Endothelial cell of umbilical vein (primary cell): ENCODE measurements at regions of chr19 and their contacts with region 1.

Region 1: DNA sequence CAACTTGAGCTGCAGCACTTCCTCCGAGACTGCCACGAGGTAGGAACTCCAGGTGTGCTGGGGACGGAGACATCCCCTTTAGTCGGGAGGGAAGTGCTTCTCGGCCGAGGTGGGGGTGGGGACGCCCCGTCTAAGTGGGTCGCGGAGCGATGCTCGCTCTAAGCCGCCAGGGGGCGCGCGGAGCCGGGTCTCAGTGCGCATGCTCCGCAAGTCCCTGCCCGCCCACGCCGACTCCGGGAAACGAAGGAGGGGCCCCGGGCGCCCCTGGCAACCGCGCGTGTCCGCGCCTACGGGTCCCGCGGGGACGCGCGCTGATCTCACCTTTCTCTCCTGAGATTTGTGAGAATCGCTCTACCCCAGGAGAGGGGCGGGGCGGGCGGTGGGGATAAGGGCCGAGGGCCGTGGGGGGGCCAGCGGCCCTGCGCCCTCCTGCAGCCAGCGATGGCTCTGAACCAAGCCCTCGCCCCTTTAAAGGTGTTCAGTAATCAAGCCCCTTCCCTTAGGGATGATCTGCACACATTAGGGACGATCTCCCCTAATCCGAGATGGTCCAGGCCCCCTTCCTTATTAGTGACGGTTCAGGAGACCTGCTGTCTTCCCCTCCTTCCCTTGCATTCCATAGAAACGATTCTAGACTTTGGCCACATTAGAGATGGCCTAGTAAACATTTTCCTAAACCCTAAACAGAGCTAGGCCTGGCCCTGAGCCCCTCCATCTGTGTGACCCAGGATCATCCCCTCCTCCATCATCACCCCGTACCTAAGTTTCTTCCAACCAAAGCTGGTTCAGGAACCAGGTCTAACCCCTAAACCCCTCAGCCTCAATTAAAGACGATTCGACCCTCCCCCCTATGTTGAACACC is 47.3 kb upstream of the SHKBP1 start:
- DNase-seq: peak; percentile 87
- H3K4me3 ChIP-seq: peak overlapping the region in 1 of 3 experiments; percentile 27
- H3K27ac ChIP-seq: no peak overlapping the region
- H3K4me1 ChIP-seq: no peaks in the 10 kb centered on the region
- H3K27me3 ChIP-seq: peaks cover 2 to 6% of the 10 kb centered on the region in 2 experiments
- CTCF ChIP-seq: peak; percentile 93 to 98
- POLR2A ChIP-seq: no peak

Region 2: GRCh38 chr19:40542202-40542859 is 13.0 kb after region 1 on chr19:
- CTCF ChIA-PET with region 1: interaction called, 14 read pairs
- POLR2A ChIA-PET with region 1: no interaction called
- dilution Hi-C with region 1: no loop called
- intact Hi-C with region 1: no loop called
- DNase-seq: no peak
- H3K4me3 ChIP-seq: no peak overlapping the region
- H3K27ac ChIP-seq: no peak overlapping the region
- H3K4me1 ChIP-seq: no peaks in the 10 kb centered on the region
- H3K27me3 ChIP-seq: no peaks in the 10 kb centered on the region
- CTCF ChIP-seq: no peak
- POLR2A ChIP-seq: no peak

Region 3: DNA sequence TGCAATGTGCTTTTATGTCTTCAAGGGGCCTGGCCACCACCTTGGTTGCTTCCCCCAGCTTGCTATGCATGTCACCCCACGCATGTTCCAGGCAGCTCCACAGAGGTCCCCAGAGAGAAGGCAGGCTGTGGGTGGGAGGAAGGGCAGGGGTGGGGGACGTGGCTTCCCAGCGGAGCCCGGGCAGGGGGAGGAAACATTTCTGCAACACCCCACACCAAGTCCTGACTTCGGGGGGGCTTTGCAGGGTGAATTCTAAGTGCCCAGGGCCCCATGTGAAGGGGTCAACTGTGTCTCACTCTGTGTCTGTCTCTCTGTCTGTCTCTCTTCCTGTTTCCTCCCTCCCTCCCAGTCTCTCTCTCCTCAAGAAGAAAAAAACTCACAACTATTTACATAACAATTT is 111.4 kb after region 1 on chr19:
- CTCF ChIA-PET with region 1: interaction called, 10 read pairs
- POLR2A ChIA-PET with region 1: no interaction called
- dilution Hi-C with region 1: no loop called
- intact Hi-C with region 1: no loop called
- DNase-seq: peak; percentile 19
- H3K4me3 ChIP-seq: no peak overlapping the region
- H3K27ac ChIP-seq: peak overlapping the region; percentile 10
- H3K4me1 ChIP-seq: peaks cover 14% of the 10 kb centered on the region
- H3K27me3 ChIP-seq: no peaks in the 10 kb centered on the region
- CTCF ChIP-seq: no peak
- POLR2A ChIP-seq: no peak

Region 4: DNA sequence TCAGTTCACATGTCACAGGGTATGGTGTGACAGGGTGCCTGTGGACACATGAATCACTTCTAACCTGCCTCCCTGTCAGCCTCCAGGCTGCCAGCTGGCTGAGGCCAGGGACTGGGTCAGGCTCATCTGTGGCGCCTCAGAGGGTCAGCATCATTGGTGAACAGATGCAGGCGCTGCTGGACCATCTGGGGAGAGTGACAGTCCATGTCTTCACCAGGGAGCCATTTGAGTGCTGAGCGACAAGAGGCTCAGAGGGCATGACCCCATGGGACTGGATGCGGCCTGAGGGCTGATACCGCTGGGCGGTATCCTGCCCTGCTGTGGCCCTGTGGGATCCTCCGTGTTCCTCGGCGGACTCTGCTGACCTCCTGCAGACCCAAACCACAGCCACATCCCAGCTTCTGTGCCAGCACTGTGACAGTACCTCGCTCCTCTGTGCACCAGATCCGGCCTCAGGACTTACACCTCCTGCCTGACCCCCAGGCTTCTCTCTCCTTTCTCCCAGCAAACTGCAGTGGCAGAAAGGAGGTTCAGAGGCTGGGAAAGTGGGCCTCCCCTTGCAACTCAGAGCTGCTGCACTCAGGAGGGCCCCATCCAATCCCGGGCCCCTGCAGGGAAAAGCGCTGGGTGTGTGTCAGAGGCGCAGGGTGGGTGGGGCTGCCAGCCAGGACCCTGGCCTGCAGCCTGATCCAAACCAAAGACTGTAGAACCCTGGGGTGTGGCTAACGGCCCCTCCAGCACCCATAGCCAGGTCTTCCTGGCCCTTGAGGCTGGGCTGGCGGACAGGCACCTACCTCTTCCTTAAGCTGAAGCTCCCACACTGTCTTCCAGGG is 210.8 kb after region 1 on chr19:
- CTCF ChIA-PET with region 1: no interaction called
- POLR2A ChIA-PET with region 1: no interaction called
- dilution Hi-C with region 1: no loop called
- intact Hi-C with region 1: no loop called
- DNase-seq: no peak
- H3K4me3 ChIP-seq: no peak overlapping the region
- H3K27ac ChIP-seq: no peak overlapping the region
- H3K4me1 ChIP-seq: peaks cover 3% of the 10 kb centered on the region
- H3K27me3 ChIP-seq: no peaks in the 10 kb centered on the region
- CTCF ChIP-seq: no peak
- POLR2A ChIP-seq: no peak